ENCODE measurements at regions of chr11 and their contacts with region 1.

Region 1: DNA sequence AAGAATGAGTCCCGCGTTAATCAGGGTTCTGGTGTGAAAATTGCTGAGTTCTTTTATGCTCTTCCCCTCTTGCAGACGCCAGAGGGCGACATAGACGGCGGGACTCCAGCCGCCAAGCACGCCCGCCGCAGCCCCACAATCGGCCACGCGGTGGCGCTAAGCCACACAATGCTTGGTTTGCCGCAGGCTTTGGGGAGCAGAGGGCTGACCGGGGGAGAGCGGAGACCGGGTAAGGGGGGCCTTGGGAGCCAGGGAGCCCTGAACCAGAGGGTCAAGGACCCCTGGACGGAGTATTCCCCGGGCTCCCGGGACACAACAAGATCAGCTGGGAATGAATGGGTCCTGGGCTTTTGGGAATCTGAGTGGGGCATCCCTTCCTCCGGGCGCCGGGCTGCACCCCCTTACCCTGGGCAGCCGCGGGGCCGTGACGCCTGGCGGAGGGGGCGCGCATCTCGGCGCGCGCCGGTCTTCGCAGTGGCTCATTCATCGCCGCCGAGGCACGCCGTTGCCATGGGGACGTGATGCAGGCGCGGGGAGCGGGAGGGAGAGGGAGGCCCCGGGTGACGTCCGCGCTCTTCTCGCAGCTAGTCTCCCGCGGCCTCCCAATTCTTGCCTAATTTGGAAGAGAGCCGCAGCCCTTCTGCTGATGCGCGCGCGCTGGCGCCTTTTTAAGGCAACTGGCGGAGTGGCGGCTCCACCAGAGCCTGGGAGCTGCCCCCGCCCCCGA is 12.2 kb upstream of the NPAS4 start:
- DNase-seq: peak; percentile 88 to 97 (median 92)
- ATAC-seq: peak; percentile 85
- H3K4me3 ChIP-seq: peak overlapping the region; percentile 18 to 62
- H3K4me3 Mint-ChIP-seq: peak overlapping the region; percentile 79
- H3K27ac ChIP-seq: no peak overlapping the region
- H3K27ac Mint-ChIP-seq: no peak overlapping the region
- H3K4me1 ChIP-seq: peaks cover 8% of the 10 kb centered on the region
- H3K4me1 Mint-ChIP-seq: peaks cover 4% of the 10 kb centered on the region
- H3K27me3 ChIP-seq: peaks cover 4 to 14% of the 10 kb centered on the region in 2 experiments
- H3K27me3 Mint-ChIP-seq: peaks cover 41% of the 10 kb centered on the region
- CTCF ChIP-seq: peak; percentile 100

Region 2: DNA sequence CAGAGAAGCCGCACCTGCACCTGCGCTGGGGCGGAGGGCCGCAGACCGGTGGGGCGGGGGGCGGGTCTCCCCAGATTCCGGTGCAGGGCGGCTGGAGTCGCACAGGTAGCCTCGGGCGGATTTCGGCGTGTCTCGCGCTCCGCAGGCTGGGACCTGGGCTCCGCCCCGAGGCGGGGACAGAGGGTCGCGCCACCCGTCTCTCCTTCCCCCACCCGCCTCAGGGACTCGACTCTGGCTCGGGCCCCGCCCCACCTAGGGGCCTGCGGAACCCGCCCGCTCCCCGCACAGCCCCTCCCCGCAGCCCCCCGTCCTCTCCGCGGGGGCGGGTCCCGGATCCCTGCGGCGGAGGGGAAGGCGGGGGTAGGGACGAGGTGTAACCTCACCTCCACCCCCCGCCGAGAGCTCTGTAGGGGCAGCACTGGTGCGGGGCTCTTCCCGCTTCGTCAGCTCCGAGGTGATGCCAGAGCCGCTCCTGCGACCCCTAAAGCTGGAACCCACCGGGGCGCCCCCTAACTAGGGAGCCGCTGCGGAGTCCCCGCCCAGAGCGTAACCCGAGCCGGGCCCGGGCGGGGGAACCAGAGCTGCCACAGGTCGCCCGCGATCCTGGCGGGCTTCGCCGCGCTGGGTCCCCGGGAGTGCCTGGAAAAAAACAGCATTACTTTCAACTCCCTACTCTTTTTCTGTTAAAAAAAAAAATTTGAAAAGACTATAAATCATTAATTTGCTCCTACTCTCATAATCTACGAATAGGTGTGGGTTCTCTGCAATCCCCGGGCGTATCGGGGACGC is 36.8 kb before region 1 on chr11 and contains the start of gene SLC29A2:
- CTCF ChIA-PET with region 1: no interaction called
- POLR2A ChIA-PET with region 1: no interaction called
- intact Hi-C with region 1: loop called in 1 of 2 experiments (anchors 1 kb)
- DNase-seq: peak; percentile 49 to 89 (median 80)
- ATAC-seq: peak; percentile 86
- H3K4me3 ChIP-seq: peak within 1 kb of the TSS; percentile 71 to 77
- H3K4me3 Mint-ChIP-seq: peak within 1 kb of the TSS; percentile 87
- H3K27ac ChIP-seq: peak within 1 kb of the TSS; percentile 63 to 68
- H3K27ac Mint-ChIP-seq: peak within 1 kb of the TSS; percentile 88
- H3K4me1 ChIP-seq: peaks cover 10% of the 10 kb centered on the region
- H3K4me1 Mint-ChIP-seq: peaks cover 12% of the 10 kb centered on the region
- H3K27me3 ChIP-seq: no peaks in the 10 kb centered on the region
- H3K27me3 Mint-ChIP-seq: no peaks in the 10 kb centered on the region
- CTCF ChIP-seq: no peak
- total RNA-seq, gene SLC29A2: 5.6 to 6.0 TPM

Region 3: DNA sequence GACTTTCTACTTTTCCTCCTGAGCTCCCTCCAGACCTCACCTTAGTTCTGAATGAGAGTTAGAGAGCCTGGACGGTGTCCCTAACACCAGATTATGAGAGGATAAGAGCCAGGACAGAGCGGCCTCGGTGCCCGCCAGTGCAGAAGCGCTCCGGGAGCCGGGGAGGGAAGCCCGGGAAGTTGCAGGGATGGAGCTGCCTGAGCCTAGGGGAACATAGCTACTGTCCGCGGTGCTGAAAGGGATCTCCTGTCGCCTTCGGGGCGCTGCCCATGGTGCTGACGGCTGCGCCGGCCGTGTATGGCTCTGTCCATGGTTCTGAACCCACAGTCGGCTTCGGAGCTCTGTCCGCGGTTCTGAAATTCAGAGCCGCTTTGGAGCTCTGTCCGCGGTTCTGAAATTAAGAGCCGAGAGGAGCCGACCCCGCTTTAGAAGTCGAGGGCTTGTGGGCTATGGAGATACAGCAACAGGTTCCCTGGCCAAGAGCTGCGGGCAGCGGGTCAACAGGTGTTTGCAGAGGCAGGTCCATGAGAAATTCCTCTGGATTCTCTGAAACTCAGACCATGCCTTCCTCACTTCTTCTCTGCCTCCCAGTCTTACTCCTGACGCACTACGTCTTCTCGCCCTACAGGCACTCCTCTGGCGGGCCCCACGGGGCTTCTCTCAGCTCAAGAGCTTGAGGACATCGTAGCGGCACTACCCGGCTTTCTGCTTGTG is 13.0 kb after region 1 on chr11:
- CTCF ChIA-PET with region 1: interaction called, 69 read pairs
- POLR2A ChIA-PET with region 1: interaction called, 7 read pairs
- intact Hi-C with region 1: loop called in 1 of 2 experiments (anchors 1 kb)
- DNase-seq: peak; percentile 81 to 93 (median 89)
- ATAC-seq: peak; percentile 98
- H3K4me3 ChIP-seq: no peak overlapping the region
- H3K4me3 Mint-ChIP-seq: no peak overlapping the region
- H3K27ac ChIP-seq: no peak overlapping the region
- H3K27ac Mint-ChIP-seq: no peak overlapping the region
- H3K4me1 ChIP-seq: no peaks in the 10 kb centered on the region
- H3K4me1 Mint-ChIP-seq: peaks cover 8% of the 10 kb centered on the region
- H3K27me3 ChIP-seq: peaks cover 16% of the 10 kb centered on the region in 2 experiments
- H3K27me3 Mint-ChIP-seq: peaks cover 28% of the 10 kb centered on the region
- CTCF ChIP-seq: no peak

Region 4: DNA sequence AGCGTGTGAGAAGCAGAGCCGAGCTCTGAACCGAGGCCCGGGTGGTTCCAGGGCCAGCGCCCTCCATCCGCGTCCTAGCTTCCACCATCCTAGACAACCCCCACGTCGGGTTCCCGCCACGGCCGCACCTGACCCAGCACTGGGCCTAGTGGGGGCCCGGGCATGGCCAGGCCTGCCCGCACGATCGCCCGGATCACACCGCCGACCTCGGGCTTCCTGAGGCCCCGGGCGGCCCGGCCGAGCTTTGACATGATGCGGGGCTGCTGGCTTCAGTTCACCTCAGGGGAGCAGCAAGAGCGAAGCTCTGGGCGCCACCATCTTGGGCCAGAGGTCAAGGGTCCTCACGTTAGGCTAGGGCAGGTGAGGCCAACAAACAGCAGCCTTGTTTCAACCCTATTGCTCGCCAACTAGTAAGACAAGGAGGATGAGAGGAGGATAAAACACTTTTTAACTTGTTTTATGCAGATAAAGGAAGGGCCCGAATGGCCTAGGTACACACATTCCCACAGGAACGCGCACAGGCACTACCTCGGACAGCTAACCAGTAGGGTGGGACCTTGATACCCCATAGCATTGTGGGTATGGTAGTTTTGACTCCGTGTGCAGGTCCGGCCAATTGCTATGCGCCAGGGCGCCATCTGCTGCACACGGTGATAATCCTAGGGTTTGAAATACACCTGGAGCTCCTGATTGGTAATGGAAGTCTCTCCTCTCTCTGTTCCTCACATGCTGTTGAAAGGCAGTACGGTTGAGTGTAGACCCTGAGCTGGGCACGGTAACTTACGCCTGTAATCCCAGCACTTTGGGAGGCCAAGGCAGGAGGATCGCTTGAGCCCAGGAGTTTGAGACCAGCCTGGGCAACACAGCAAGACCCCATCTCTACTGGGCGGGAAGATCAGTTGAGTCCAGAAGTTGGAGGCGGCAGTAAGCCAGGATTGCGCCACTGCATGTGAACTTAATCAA is 30.1 kb after region 1 on chr11 and contains the start of gene MRPL11:
- CTCF ChIA-PET with region 1: interaction called, 7 read pairs
- POLR2A ChIA-PET with region 1: no interaction called
- intact Hi-C with region 1: loop called (anchors 1 kb)
- DNase-seq: peak; percentile 79 to 96 (median 90)
- ATAC-seq: peak; percentile 99
- H3K4me3 ChIP-seq: peak within 1 kb of the TSS; percentile 72 to 78
- H3K4me3 Mint-ChIP-seq: peak within 1 kb of the TSS; percentile 91
- H3K27ac ChIP-seq: peak within 1 kb of the TSS; percentile 66 to 85
- H3K27ac Mint-ChIP-seq: peak within 1 kb of the TSS; percentile 98
- H3K4me1 ChIP-seq: peaks cover 7% of the 10 kb centered on the region
- H3K4me1 Mint-ChIP-seq: peaks cover 10% of the 10 kb centered on the region
- H3K27me3 ChIP-seq: no peaks in the 10 kb centered on the region
- H3K27me3 Mint-ChIP-seq: peaks cover 2% of the 10 kb centered on the region
- CTCF ChIP-seq: peak; percentile 64
- total RNA-seq, gene MRPL11: 19.8 to 20.6 TPM

Region 5: GRCh38 chr11:66579017-66579606 is 170.5 kb after region 1 on chr11:
- CTCF ChIA-PET with region 1: interaction called, 7 read pairs
- POLR2A ChIA-PET with region 1: no interaction called
- intact Hi-C with region 1: loop called in 1 of 2 experiments (anchors 1 kb)
- DNase-seq: peak; percentile 43 to 86 (median 80)
- ATAC-seq: peak; percentile 90
- H3K4me3 ChIP-seq: no peak overlapping the region
- H3K4me3 Mint-ChIP-seq: no peak overlapping the region
- H3K27ac ChIP-seq: no peak overlapping the region
- H3K27ac Mint-ChIP-seq: no peak overlapping the region
- H3K4me1 ChIP-seq: no peaks in the 10 kb centered on the region
- H3K4me1 Mint-ChIP-seq: peaks cover 6% of the 10 kb centered on the region
- H3K27me3 ChIP-seq: no peaks in the 10 kb centered on the region
- H3K27me3 Mint-ChIP-seq: peaks cover 2% of the 10 kb centered on the region
- CTCF ChIP-seq: peak; percentile 86